PC-3 (cell line): ENCODE measurements at regions of chr3 and their contacts with region 1.

Region 1: DNA sequence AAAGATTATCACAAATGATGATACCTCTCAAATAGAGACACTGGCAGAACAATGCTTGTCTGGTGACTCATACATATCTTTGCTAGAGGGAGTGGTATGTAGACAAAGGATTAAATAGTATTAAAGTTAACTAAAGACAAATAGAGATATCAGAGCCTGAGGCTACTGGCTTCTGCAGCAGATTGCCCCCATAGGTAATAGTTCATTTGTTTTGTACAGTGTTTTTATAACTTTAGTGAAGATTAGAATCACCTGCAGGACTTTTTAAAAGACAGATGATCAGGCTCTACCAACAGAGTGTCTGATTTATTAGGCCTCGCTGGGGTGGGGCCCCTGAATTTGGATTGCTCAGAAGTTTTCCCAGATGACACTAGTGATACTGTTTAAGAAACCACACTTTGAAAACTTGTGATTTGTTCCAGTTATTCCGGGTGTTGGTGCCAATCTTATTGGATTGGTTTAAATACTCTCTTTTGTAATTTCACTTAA is 96.4 kb downstream of the NAALADL2 start:
- DNase-seq: peak; percentile 90
- ATAC-seq: peak; percentile 84
- H3K4me3 ChIP-seq: 0 out of 2 replicates have a peak overlapping the region, but pooled peaks have one; percentile 2
- H3K27ac ChIP-seq: peak overlapping the region; percentile 81
- H3K4me1 ChIP-seq: peaks cover 61% of the 10 kb centered on the region
- H3K27me3 ChIP-seq: no peaks in the 10 kb centered on the region
- CTCF ChIP-seq: no peak

Region 2: DNA sequence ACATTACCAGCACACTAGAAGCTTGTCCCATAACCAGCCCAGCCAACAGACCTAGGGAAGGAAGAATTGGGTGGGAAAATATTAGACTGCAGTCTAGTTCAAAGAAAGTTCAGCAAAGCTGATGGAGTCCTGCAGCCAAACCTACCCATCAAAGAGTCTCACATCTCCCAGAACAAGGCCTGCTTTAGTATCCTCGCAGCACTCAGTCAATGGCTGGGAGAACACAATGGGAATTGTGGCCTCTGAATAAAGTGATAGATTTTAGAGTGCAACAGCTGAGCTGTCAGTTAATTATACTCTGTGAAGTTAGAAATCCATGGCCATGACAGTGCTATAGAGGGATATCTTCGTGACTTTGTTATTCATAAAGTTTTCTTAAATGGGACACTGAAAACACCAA is 303.6 kb before region 1 on chr3:
- CTCF ChIA-PET with region 1: no interaction called
- POLR2A ChIA-PET with region 1: interaction called, 11 read pairs
- intact Hi-C with region 1: no loop called
- DNase-seq: no peak
- ATAC-seq: no peak
- H3K4me3 ChIP-seq: no peak overlapping the region
- H3K27ac ChIP-seq: no peak overlapping the region
- H3K4me1 ChIP-seq: no peaks in the 10 kb centered on the region
- H3K27me3 ChIP-seq: no peaks in the 10 kb centered on the region
- CTCF ChIP-seq: no peak

Region 3: DNA sequence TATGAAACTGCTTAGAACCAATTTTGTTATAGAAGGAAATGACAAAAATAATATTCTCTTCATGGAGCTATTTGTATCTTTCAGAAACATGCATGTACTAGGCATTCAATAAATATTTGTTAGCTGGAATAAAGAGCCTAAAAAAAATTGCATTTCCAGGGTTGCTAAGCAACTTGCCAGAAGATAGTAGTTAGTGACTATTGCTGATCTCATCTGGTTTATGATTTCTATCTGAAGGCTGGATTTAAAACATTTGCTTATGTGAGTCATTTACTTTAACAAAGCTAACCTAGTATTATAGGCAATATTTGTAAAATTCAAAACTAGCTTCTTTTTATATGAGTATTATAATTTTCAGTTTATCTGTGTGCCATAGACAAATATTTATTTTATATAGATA is 18.1 kb before region 1 on chr3:
- CTCF ChIA-PET with region 1: no interaction called
- POLR2A ChIA-PET with region 1: no interaction called
- intact Hi-C with region 1: loop called (anchors 1 kb)
- DNase-seq: peak; percentile 85
- ATAC-seq: peak; percentile 82
- H3K4me3 ChIP-seq: no peak overlapping the region; the same call in 1 of the 2 replicates
- H3K27ac ChIP-seq: peak overlapping the region; percentile 63
- H3K4me1 ChIP-seq: peaks cover 25% of the 10 kb centered on the region
- H3K27me3 ChIP-seq: no peaks in the 10 kb centered on the region
- CTCF ChIP-seq: no peak

Region 4: DNA sequence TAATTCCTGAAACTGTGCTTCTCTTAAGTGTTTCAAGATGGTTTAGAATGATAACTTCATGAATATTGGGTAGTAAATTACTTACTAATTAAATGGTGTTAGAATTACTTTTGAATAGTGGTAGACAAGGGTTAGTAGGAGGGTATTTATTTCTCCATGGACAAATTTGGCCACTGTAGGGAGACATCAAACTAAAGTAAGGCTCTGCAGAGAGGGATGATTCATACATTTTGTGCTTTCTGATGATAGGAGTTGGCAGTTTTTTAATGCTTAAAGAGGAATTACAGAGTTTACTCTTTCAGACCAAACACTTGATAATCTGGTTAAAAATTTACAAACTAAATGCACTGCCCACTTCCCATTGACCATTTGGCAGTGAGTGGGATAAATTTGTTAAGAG is 31.1 kb after region 1 on chr3:
- CTCF ChIA-PET with region 1: no interaction called
- POLR2A ChIA-PET with region 1: no interaction called
- intact Hi-C with region 1: no loop called
- DNase-seq: peak; percentile 23
- ATAC-seq: peak; percentile 54
- H3K4me3 ChIP-seq: no peak overlapping the region
- H3K27ac ChIP-seq: no peak overlapping the region
- H3K4me1 ChIP-seq: 0 out of 2 replicates have a peak, but pooled peaks cover 6% of the 10 kb centered on the region
- H3K27me3 ChIP-seq: no peaks in the 10 kb centered on the region
- CTCF ChIP-seq: no peak

Region 5: DNA sequence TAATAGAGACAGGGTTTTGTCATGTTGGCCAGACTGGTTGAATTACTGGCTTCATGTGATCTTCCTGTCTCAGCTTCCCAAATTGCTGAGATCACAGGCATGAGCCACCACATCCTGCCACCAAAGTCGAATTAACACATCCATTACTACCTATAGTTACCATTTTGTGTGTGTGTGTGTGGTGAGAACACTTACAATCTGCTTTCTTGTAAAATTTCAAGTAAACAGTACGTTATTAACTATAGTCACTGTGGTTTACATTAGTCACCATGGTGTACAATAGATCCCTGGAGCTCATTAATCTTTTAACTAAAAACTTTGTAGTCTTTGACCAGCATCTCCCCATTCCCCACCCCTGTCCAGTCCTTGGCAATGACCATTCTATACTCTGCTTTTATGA is 173.6 kb after region 1 on chr3:
- CTCF ChIA-PET with region 1: no interaction called
- POLR2A ChIA-PET with region 1: no interaction called
- intact Hi-C with region 1: no loop called
- DNase-seq: peak; percentile 84
- ATAC-seq: peak; percentile 94
- H3K4me3 ChIP-seq: no peak overlapping the region
- H3K27ac ChIP-seq: peak overlapping the region; percentile 82
- H3K4me1 ChIP-seq: peaks cover 16% of the 10 kb centered on the region
- H3K27me3 ChIP-seq: no peaks in the 10 kb centered on the region
- CTCF ChIP-seq: no peak